Activated B cell treated with CpG ODN at 0.5 μM for 24 hours (primary cell): ENCODE measurements at regions of chr7 and their contacts with region 1.

Region 1: GRCh38 chr7:41451826-41452225 is 251.1 kb downstream of the INHBA start:
- DNase-seq: no peak
- ATAC-seq: no peak
- H3K4me3 Mint-ChIP-seq: no peak overlapping the region
- H3K27ac Mint-ChIP-seq: no peak overlapping the region
- H3K4me1 Mint-ChIP-seq: no peaks in the 10 kb centered on the region
- H3K27me3 Mint-ChIP-seq: peaks cover 2% of the 10 kb centered on the region
- CTCF ChIP-seq: no peak

Region 2: GRCh38 chr7:41529831-41530230 is 78.0 kb after region 1 on chr7:
- CTCF ChIA-PET with region 1: no interaction called
- POLR2A ChIA-PET with region 1: interaction called, 12 read pairs
- intact Hi-C with region 1: no loop called
- DNase-seq: no peak
- ATAC-seq: no peak
- H3K4me3 Mint-ChIP-seq: no peak overlapping the region
- H3K27ac Mint-ChIP-seq: no peak overlapping the region
- H3K4me1 Mint-ChIP-seq: no peaks in the 10 kb centered on the region
- H3K27me3 Mint-ChIP-seq: peaks cover 2% of the 10 kb centered on the region
- CTCF ChIP-seq: no peak

Region 3: DNA sequence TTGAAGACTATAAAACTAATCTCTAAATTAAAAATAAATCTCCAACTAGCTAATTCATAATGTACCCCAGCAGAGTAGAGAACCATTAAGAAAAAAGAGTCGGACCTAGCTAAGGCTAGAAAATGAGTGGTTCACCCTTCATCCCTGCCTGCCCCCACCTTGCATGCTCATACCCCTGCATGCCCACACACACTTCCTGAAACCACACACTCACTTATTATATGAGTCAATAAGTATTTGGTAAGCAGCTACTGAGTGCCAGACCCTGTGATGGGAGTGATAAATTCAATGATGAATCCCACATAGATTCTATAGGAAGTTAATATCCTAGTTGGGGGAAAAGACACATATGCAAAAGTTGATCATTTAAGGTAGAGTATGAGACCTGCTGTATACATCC is 404.0 kb after region 1 on chr7:
- CTCF ChIA-PET with region 1: no interaction called
- POLR2A ChIA-PET with region 1: no interaction called
- intact Hi-C with region 1: no loop called
- DNase-seq: no peak
- ATAC-seq: no peak
- H3K4me3 Mint-ChIP-seq: no peak overlapping the region
- H3K27ac Mint-ChIP-seq: no peak overlapping the region
- H3K4me1 Mint-ChIP-seq: no peaks in the 10 kb centered on the region
- H3K27me3 Mint-ChIP-seq: no peaks in the 10 kb centered on the region
- CTCF ChIP-seq: no peak